Uterus (tissue), 4 donors: ENCODE measurements at regions of chr2 and their contacts with region 1.

Region 1: DNA sequence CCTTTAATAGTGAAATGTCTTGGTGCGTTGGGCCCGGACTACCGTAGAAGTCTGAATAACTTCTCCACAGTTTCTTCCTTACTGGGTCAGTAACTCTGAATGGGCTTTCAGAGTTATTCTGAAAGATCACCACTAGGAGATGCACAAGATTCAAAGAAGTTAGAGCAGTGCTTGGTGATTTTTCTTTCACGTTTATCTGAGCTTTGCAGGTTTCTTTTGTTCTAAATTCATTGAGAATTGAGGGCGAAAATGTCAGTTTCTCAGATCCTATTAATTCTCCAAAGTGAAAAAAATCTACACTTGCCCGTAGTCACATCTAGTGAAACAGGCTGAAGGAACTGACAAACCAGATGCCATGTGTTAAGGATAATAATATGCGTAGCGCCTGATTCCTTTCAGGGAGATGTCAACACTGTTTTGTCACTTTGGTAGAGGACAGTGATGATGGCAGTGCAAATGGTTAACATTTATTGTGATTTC is 70.1 kb downstream of the QPCT start:
- DNase-seq: peak in 1 of 2 donors; percentile 44
- H3K4me3 ChIP-seq: no peak overlapping the region
- H3K27ac ChIP-seq: peak overlapping the region; percentile 40 to 66
- H3K4me1 ChIP-seq: no peaks in the 10 kb centered on the region
- H3K27me3 ChIP-seq: no peaks in the 10 kb centered on the region
- CTCF ChIP-seq: peak; percentile 77 to 98 (median 90)
- POLR2A ChIP-seq: no peak

Region 2: GRCh38 chr2:37832590-37833197 is 418.2 kb after region 1 on chr2:
- intact Hi-C with region 1: loop called (anchors 5 kb)
- DNase-seq: peak; percentile 87 to 94
- H3K4me3 ChIP-seq: no peak overlapping the region
- H3K27ac ChIP-seq: peak overlapping the region; percentile 53 to 74
- H3K4me1 ChIP-seq: peaks cover 5 to 6% of the 10 kb centered on the region in 2 donors
- H3K27me3 ChIP-seq: no peaks in the 10 kb centered on the region
- CTCF ChIP-seq: peak; percentile 66 to 92 (median 80)
- POLR2A ChIP-seq: no peak

Region 3: GRCh38 chr2:37877457-37878315 is 463.2 kb after region 1 on chr2:
- intact Hi-C with region 1: loop called (anchors 5 kb)
- DNase-seq: peak in 1 of 2 donors; percentile 56
- H3K4me3 ChIP-seq: no peak overlapping the region
- H3K27ac ChIP-seq: peak overlapping the region in 1 of 2 donors; percentile 74
- H3K4me1 ChIP-seq: no peaks in the 10 kb centered on the region
- H3K27me3 ChIP-seq: no peaks in the 10 kb centered on the region
- CTCF ChIP-seq: peak; percentile 67 to 91 (median 84)
- POLR2A ChIP-seq: no peak